CD8-positive, alpha-beta memory T cell (primary cell): ENCODE measurements at regions of chr4 and their contacts with region 1.

Region 1: GRCh38 chr4:26860157-26860921 is at the start of gene STIM2:
- DNase-seq: peak; percentile 94 to 100 (median 99)
- H3K4me3 ChIP-seq: peak within 1 kb of the TSS; percentile 84
- H3K4me3 Mint-ChIP-seq: peak within 1 kb of the TSS; percentile 94 to 99 (median 98)
- H3K27ac ChIP-seq: peak within 1 kb of the TSS; percentile 79
- H3K27ac Mint-ChIP-seq: peak within 1 kb of the TSS; percentile 97 to 100 (median 99)
- H3K4me1 ChIP-seq: peaks cover 56% of the 10 kb centered on the region
- H3K4me1 Mint-ChIP-seq: peaks cover 58 to 72% (median 67%) of the 10 kb centered on the region in 3 donors
- H3K27me3 ChIP-seq: no peaks in the 10 kb centered on the region
- H3K27me3 Mint-ChIP-seq: peaks cover 0 to 3% of the 10 kb centered on the region in 2 donors
- total RNA-seq, gene STIM2: 47.8 to 51.0 TPM

Region 2: DNA sequence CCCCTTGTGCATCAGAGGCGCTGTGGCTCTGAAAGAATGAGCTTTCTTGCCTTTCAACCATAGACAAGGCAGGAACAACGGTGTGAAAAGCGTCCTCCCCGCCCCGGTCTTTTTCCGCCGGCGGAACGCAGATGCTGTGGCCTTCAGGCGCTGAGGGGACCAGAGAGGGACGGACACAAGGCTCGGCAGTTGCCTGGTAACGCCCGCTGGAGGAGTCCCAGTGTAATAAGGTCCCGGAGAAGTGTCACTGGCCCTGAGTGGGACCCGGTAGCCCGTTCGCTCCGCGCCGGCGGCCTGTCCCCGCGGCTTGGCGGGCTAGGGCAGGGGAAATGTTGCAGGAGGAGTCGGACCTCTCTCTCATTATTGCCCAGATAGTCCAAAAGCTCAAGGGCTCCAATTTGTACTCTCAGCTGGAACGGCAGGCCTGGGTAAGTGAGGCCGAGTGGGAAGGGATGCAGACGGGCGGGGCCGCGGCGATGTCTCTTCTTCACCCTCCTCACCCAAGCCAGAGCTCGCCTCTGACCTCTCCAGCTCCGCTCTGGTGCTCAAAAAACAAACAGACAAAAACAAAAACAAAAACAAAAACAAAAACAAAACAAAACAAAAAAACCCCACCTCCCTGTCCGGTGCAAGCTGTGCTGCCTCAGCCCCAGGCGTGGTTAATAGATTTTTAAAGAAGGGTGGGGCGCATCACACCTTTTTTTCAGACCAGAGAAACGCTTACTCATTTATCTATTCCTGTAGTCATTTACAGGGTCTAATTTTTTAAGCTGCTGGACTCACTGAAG is 276.3 kb before region 1 on chr4 and contains the start of gene TBC1D19:
- CTCF ChIA-PET with region 1: interaction called, 5 read pairs
- POLR2A ChIA-PET with region 1: interaction called, 17 read pairs
- DNase-seq: peak; percentile 71 to 90 (median 86)
- H3K4me3 ChIP-seq: peak within 1 kb of the TSS; percentile 87
- H3K4me3 Mint-ChIP-seq: peak within 1 kb of the TSS; percentile 96 to 100 (median 97)
- H3K27ac ChIP-seq: peak within 1 kb of the TSS; percentile 99
- H3K27ac Mint-ChIP-seq: peak within 1 kb of the TSS; percentile 97 to 100 (median 99)
- H3K4me1 ChIP-seq: peaks cover 12% of the 10 kb centered on the region
- H3K4me1 Mint-ChIP-seq: peaks cover 35 to 48% (median 42%) of the 10 kb centered on the region in 3 donors
- H3K27me3 ChIP-seq: no peaks in the 10 kb centered on the region
- H3K27me3 Mint-ChIP-seq: peaks cover 4 to 8% of the 10 kb centered on the region in 2 donors
- total RNA-seq, gene TBC1D19: 4.4 to 6.3 TPM

Region 3: GRCh38 chr4:26746802-26747213 is 113.5 kb before region 1 on chr4:
- CTCF ChIA-PET with region 1: no interaction called
- POLR2A ChIA-PET with region 1: interaction called, 10 read pairs
- DNase-seq: no peak
- H3K4me3 ChIP-seq: no peak overlapping the region
- H3K4me3 Mint-ChIP-seq: peak overlapping the region in 1 of 7 donors; percentile 18
- H3K27ac ChIP-seq: no peak overlapping the region
- H3K27ac Mint-ChIP-seq: no peak overlapping the region
- H3K4me1 ChIP-seq: no peaks in the 10 kb centered on the region
- H3K4me1 Mint-ChIP-seq: peaks cover 5 to 10% (median 9%) of the 10 kb centered on the region in 3 donors
- H3K27me3 ChIP-seq: no peaks in the 10 kb centered on the region
- H3K27me3 Mint-ChIP-seq: no peaks in the 10 kb centered on the region

Region 4: GRCh38 chr4:26830701-26831100 is 29.6 kb before region 1 on chr4:
- CTCF ChIA-PET with region 1: no interaction called
- POLR2A ChIA-PET with region 1: no interaction called
- DNase-seq: no peak
- H3K4me3 ChIP-seq: no peak overlapping the region
- H3K4me3 Mint-ChIP-seq: no peak overlapping the region
- H3K27ac ChIP-seq: no peak overlapping the region
- H3K27ac Mint-ChIP-seq: peak overlapping the region in 1 of 8 donors; percentile 24
- H3K4me1 ChIP-seq: no peaks in the 10 kb centered on the region
- H3K4me1 Mint-ChIP-seq: no peaks in the 10 kb centered on the region
- H3K27me3 ChIP-seq: no peaks in the 10 kb centered on the region
- H3K27me3 Mint-ChIP-seq: no peaks in the 10 kb centered on the region

Region 5: DNA sequence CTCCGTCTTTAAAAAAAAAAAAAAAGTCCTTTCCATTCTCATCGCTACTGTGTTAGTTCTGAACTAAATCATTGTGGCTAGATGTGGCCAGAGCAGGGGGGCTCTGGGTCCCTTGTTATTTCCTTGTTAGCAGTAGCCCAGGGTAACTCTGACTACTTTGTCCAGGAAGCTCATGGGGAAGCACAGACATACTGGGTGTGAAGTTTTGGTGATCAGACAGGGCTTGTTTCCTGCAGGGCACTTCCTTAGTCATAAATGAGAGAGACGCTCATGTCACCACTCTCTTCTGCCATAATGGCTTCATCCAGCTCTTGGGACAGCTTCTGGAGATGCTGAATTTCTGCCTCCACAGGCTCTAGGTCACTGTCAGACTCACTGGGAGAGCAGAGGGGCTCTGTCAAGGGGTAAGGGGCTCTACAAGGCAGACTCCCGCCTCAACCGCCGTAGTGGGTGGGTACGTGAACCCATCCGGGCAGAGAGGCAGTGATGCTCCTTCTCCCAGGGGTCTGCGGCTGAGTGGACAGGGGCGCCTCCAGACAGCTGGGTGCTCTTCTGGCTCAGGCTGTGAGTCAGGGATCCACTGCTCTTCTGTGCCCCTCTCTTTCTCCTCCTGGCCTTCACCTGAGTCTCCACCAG is 13.2 kb after region 1 on chr4:
- CTCF ChIA-PET with region 1: interaction called, 3 read pairs
- POLR2A ChIA-PET with region 1: interaction called, 21 read pairs
- DNase-seq: peak; percentile 61 to 90 (median 69)
- H3K4me3 ChIP-seq: no peak overlapping the region
- H3K4me3 Mint-ChIP-seq: peak overlapping the region; percentile 53 to 86 (median 72)
- H3K27ac ChIP-seq: peak overlapping the region; percentile 65
- H3K27ac Mint-ChIP-seq: peak overlapping the region; percentile 88 to 99 (median 96)
- H3K4me1 ChIP-seq: peaks cover 70% of the 10 kb centered on the region
- H3K4me1 Mint-ChIP-seq: peaks cover 83 to 94% (median 93%) of the 10 kb centered on the region in 3 donors
- H3K27me3 ChIP-seq: no peaks in the 10 kb centered on the region
- H3K27me3 Mint-ChIP-seq: no peaks in the 10 kb centered on the region

Region 6: DNA sequence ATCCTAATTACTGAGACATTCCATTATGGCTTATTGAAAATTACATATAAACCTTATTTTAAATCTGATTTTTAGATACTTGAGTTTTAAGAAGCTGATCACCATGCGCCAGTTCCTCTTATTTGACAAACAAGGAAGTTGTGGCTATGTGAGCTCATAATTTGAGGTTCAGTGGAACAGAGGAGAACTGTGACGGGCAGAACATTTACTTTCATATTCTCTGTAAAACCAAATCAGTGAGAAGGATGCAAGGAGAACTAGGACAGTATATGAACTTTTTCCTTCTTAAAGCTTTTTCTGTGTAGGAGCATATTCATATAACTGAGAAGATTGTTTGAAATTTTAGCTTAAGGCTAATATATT is 25.6 kb after region 1 on chr4:
- CTCF ChIA-PET with region 1: interaction called, 51 read pairs
- POLR2A ChIA-PET with region 1: interaction called, 96 read pairs
- DNase-seq: peak in 4 of 5 donors; percentile 12 to 78 (median 72)
- H3K4me3 ChIP-seq: peak overlapping the region; percentile 52
- H3K4me3 Mint-ChIP-seq: peak overlapping the region; percentile 77 to 83 (median 79)
- H3K27ac ChIP-seq: peak overlapping the region; percentile 64
- H3K27ac Mint-ChIP-seq: peak overlapping the region; percentile 81 to 100 (median 96)
- H3K4me1 ChIP-seq: peaks cover 60% of the 10 kb centered on the region
- H3K4me1 Mint-ChIP-seq: peaks cover 67 to 96% (median 93%) of the 10 kb centered on the region in 3 donors
- H3K27me3 ChIP-seq: no peaks in the 10 kb centered on the region
- H3K27me3 Mint-ChIP-seq: no peaks in the 10 kb centered on the region

Region 7: DNA sequence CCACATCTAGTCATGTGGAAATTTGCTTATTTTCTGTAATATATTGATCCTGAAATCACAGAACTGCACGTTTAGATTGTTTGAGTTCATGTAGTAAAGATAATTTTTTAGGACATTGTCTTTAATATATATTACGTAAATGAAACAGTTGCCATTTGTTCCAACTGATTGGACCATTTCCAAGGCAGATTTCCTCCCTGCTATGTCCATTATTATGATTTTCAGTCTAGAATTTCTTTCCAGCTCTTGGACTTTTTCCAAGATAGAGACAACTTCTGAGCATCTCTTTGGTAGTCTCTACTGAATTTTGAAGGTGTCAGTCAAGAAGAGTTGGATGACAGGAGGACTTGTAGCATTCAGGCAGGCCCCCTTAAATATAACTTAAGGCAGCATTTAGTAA is 94.9 kb after region 1 on chr4:
- CTCF ChIA-PET with region 1: no interaction called
- POLR2A ChIA-PET with region 1: no interaction called
- DNase-seq: no peak
- H3K4me3 ChIP-seq: no peak overlapping the region
- H3K4me3 Mint-ChIP-seq: no peak overlapping the region
- H3K27ac ChIP-seq: no peak overlapping the region
- H3K27ac Mint-ChIP-seq: no peak overlapping the region
- H3K4me1 ChIP-seq: peaks cover 35% of the 10 kb centered on the region
- H3K4me1 Mint-ChIP-seq: peaks cover 61 to 84% (median 81%) of the 10 kb centered on the region in 3 donors
- H3K27me3 ChIP-seq: no peaks in the 10 kb centered on the region
- H3K27me3 Mint-ChIP-seq: no peaks in the 10 kb centered on the region

Region 8: GRCh38 chr4:27000820-27001219 is 140.5 kb after region 1 on chr4:
- CTCF ChIA-PET with region 1: interaction called, 16 read pairs
- POLR2A ChIA-PET with region 1: interaction called, 5 read pairs
- DNase-seq: peak in 1 of 5 donors; percentile 23
- H3K4me3 ChIP-seq: no peak overlapping the region
- H3K4me3 Mint-ChIP-seq: no peak overlapping the region
- H3K27ac ChIP-seq: no peak overlapping the region
- H3K27ac Mint-ChIP-seq: peak overlapping the region in 5 of 8 donors; percentile 39 to 79 (median 50)
- H3K4me1 ChIP-seq: peaks cover 15% of the 10 kb centered on the region
- H3K4me1 Mint-ChIP-seq: peaks cover 35 to 57% (median 56%) of the 10 kb centered on the region in 3 donors
- H3K27me3 ChIP-seq: no peaks in the 10 kb centered on the region
- H3K27me3 Mint-ChIP-seq: peaks cover 0 to 1% of the 10 kb centered on the region in 2 donors

Region 9: DNA sequence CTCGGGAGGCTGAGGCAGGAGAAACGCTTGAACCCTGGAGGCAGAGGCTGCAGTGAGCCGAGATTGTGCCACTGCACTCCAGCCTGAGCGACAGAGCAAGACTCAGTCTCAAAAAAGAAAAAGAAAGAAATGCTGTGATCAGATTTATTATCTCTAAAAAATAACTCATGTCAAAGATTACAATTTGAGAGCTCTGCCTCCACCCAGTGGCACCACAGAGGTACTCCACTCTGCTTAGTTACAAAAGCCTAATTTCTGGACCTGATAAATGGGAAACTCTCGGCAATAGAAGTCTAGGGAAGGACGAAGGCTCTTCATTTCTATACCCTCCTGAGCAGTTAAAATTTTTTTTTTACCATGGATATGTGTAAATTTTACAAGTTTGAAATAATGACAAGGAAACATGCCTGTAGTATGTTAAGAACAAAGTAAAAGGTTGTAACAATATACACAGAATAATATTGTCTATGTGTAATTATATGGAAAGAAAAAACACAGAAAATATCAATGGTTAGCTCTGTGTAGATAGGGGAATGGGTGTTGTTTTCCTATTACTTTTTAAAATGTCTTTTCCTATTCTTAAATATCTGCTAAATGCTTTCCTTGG is 150.1 kb after region 1 on chr4:
- CTCF ChIA-PET with region 1: interaction called, 14 read pairs
- POLR2A ChIA-PET with region 1: interaction called, 5 read pairs
- DNase-seq: peak; percentile 38 to 64 (median 43)
- H3K4me3 ChIP-seq: no peak overlapping the region
- H3K4me3 Mint-ChIP-seq: no peak overlapping the region
- H3K27ac ChIP-seq: no peak overlapping the region
- H3K27ac Mint-ChIP-seq: peak overlapping the region in 7 of 8 donors; percentile 2 to 95 (median 73)
- H3K4me1 ChIP-seq: no peaks in the 10 kb centered on the region
- H3K4me1 Mint-ChIP-seq: peaks cover 12 to 21% (median 17%) of the 10 kb centered on the region in 3 donors
- H3K27me3 ChIP-seq: no peaks in the 10 kb centered on the region
- H3K27me3 Mint-ChIP-seq: no peaks in the 10 kb centered on the region